Activated naive CD4-positive, alpha-beta T cell treated with anti-CD3 and anti-CD28 coated beads, Interleukin-2, amount 10 ng/mL, durations not matched to agents 7 days and 5 days (primary cell): ENCODE measurements at regions of chr19 and their contacts with region 1.

Region 1: DNA sequence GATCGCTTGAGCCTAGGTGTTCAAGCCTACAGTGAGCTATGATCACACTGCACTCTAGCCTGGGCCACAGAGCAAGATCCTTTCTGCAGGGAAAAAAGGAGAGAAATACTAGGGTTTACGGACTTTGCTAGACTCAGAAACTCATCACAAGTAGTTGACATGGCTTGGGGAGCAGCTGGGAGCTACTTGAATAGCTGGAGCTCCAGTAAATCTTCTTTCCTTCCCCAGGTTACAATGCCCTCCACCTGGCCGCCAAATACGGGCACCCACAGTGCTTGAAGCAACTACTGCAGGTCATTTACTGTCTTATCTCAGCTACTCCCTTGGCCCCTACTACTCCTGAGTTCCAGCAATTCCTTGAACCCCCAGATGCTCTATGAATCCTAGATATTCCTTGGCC is 19.3 kb downstream of the ANKRD24 start:
- DNase-seq: no peak
- H3K4me3 Mint-ChIP-seq: no peak overlapping the region
- H3K27ac Mint-ChIP-seq: no peak overlapping the region
- H3K4me1 Mint-ChIP-seq: peaks cover 8% of the 10 kb centered on the region
- H3K27me3 Mint-ChIP-seq: peaks cover 47% of the 10 kb centered on the region

Region 2: DNA sequence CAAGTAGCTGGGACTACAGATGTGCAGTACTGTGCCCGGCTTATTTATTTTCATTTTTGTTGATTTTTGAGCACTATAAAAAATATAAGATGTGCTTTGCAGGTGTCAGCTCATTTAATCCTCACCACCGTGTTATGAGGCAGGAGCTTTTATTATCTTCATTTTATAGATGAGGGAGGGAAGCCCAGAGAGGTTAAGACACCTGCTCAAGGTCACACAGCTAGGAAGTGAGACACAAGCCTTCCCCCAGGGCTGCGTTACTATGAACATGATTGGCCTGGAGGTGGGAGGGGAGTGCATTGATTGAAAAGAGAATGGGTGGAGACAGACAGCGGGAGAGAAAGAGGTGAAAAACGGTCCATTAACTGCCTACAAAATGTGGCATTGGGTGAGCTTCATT is 12.2 kb before region 1 on chr19:
- CTCF ChIA-PET with region 1: interaction called, 10 read pairs
- DNase-seq: no peak
- H3K4me3 Mint-ChIP-seq: no peak overlapping the region
- H3K27ac Mint-ChIP-seq: no peak overlapping the region
- H3K4me1 Mint-ChIP-seq: peaks cover 7% of the 10 kb centered on the region
- H3K27me3 Mint-ChIP-seq: peaks cover 34% of the 10 kb centered on the region

Region 3: DNA sequence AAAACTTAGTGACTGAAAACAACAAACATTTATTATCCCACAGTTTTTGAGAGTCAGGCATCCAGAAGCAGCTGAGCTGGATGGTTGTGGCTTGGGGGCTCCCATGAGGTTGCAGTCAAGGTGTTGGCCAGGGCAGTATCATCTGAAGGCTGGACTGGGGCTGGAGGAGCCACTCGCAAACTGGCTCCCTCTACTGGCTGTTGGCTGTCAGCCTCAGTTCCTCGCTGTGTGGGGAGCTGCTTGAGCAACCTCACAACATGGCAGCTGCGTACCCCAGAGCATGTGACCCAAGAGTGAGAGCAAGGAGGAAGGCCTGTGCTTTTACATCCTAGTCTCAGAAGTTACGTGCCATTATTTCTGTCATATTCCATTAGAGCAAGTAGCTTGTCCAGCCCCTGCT is 54.8 kb after region 1 on chr19:
- CTCF ChIA-PET with region 1: no interaction called
- DNase-seq: no peak
- H3K4me3 Mint-ChIP-seq: no peak overlapping the region
- H3K27ac Mint-ChIP-seq: no peak overlapping the region
- H3K4me1 Mint-ChIP-seq: no peaks in the 10 kb centered on the region
- H3K27me3 Mint-ChIP-seq: no peaks in the 10 kb centered on the region